Ovary (tissue), 10 donors: ENCODE measurements at regions of chr9 and their contacts with region 1.

Region 1: GRCh38 chr9:95004411-95005277 is 278.1 kb downstream of the AOPEP start:
- DNase-seq: peak; percentile 62 to 78 (median 74)
- H3K4me3 ChIP-seq: peak overlapping the region; percentile 72
- H3K27ac ChIP-seq: peak overlapping the region; percentile 100
- H3K4me1 ChIP-seq: peaks cover 10% of the 10 kb centered on the region
- H3K27me3 ChIP-seq: no peaks in the 10 kb centered on the region
- CTCF ChIP-seq: no peak
- EP300 ChIP-seq: no peak
- POLR2A ChIP-seq: peak; percentile 23

Region 2: DNA sequence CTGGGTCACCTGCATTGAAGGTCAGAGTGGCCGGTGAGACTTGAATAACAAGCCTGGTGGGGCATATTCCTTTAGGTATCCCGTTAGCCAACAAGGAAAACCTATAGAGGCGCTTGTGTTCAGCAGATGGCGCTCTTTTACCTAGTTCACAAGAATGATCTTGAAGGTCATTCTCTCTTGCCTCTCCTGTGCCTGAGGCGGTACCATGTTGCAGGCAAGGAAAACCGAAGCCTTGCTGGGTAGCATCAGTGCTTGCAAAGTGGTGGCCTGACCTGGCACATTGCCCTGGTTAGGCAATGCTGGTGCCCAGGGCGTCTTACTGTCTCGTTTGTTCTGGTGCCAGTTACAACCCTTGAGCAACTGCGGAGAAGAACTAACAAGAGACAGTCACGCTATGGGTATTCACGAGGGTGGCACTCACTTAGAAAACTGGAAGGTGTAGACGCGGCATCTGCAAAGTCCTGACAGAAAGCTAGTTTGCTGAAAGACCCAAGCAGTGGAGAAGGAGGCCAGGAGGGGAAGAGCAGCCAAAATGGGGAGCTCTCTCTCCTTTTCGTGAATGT is 221.5 kb before region 1 on chr9:
- intact Hi-C with region 1: loop called in 1 of 4 experiments (anchors 10 kb)
- DNase-seq: peak; percentile 62 to 83 (median 69)
- H3K4me3 ChIP-seq: no peak overlapping the region
- H3K27ac ChIP-seq: no peak overlapping the region
- H3K4me1 ChIP-seq: peaks cover 3% of the 10 kb centered on the region
- H3K27me3 ChIP-seq: no peaks in the 10 kb centered on the region
- CTCF ChIP-seq: peak in 2 of 3 donors; percentile 71 to 79
- EP300 ChIP-seq: no peak
- POLR2A ChIP-seq: no peak

Region 3: GRCh38 chr9:94860968-94861871 is 143.4 kb before region 1 on chr9:
- intact Hi-C with region 1: loop called in 1 of 4 experiments (anchors 10 kb)
- DNase-seq: no peak
- H3K4me3 ChIP-seq: no peak overlapping the region
- H3K27ac ChIP-seq: no peak overlapping the region
- H3K4me1 ChIP-seq: peaks cover 4% of the 10 kb centered on the region
- H3K27me3 ChIP-seq: no peaks in the 10 kb centered on the region
- CTCF ChIP-seq: no peak
- EP300 ChIP-seq: no peak
- POLR2A ChIP-seq: no peak

Region 4: DNA sequence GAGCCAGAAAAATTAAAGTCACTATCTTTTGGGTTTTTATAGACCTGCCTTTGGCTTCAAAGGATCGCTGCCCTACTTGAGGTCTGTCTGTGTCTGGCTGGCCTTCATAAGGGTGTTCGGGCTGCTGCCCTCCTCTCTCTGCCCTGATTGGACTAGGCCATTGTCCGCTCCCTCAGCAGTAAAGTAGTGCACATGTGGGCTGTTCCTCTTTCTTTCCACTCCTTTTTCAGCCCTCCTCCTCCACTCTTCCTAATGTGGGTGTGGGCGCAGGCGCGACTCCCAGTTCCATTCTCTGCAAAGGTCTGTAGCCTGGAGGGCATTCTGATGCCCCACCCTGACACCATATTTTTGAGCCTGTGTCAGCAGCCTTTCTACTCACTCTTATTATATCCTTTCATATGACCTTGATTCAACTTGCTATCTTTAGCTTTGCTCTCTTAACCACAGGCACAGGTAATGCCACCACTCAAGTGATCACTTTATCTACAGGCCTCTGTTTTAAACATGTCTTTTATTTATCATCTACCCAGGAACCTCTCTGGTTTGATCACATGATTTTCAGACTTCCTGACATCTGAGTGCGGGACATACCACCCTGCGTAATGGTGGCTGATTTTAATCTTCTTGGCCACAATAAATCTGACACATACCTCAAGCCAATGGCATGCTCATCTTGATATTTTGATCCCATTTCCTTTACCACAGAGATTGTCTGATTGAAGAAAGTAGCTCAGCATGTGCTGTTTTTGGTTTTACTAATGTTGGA is 133.7 kb before region 1 on chr9:
- intact Hi-C with region 1: loop called in 2 of 4 experiments (anchors 5 to 10 kb)
- DNase-seq: no peak
- H3K4me3 ChIP-seq: no peak overlapping the region
- H3K27ac ChIP-seq: no peak overlapping the region
- H3K4me1 ChIP-seq: peaks cover 18% of the 10 kb centered on the region
- H3K27me3 ChIP-seq: no peaks in the 10 kb centered on the region
- CTCF ChIP-seq: no peak
- EP300 ChIP-seq: no peak
- POLR2A ChIP-seq: no peak

Region 5: DNA sequence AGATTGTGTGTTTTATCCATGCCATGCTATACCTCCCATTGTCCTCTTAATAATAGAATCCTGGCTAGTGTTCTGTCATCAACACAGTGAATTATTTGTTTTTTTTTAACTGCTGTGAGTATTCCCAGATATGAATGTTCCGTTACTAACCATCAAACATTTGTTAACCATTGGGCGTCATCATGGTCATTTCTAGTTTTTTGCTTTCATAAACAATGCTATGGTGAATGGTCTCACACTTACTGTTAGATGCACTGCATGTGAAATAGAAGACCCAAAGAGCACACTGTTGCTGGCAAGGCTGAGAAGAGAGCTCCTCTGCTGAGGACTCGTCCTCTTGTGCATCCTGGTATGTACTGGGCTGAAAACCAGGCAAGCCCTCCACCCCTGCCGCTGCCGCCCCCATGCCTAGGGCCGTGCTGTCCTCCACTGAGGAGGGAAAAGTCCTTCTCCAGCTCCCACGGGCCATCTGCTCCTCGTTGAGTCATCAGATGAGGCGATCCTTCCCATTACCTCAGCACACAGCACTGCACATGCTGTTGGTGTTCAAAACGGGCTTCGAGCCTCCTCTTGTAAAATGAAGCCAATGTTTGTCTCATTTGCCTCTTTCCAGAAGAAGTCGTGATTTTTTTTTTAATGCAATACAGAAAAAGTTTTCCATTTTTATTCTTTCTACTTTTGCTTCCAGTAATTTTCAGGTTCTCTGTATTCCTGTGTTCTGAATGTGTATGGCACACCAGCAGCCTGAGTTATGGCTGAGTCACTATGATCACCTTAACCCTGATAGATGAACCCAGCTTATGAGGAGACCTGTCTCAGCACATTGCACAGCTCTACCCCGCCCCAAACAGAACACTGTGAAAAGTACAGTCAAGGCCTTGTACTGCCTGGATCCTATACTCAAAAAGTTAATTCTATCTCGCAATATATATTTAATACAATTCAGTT is 59.2 kb before region 1 on chr9:
- intact Hi-C with region 1: loop called in 1 of 4 experiments (anchors 10 kb)
- DNase-seq: peak; percentile 62 to 73 (median 67)
- H3K4me3 ChIP-seq: no peak overlapping the region
- H3K27ac ChIP-seq: peak overlapping the region; percentile 28 to 39
- H3K4me1 ChIP-seq: peaks cover 16% of the 10 kb centered on the region
- H3K27me3 ChIP-seq: no peaks in the 10 kb centered on the region
- CTCF ChIP-seq: no peak
- EP300 ChIP-seq: no peak
- POLR2A ChIP-seq: no peak

Region 6: DNA sequence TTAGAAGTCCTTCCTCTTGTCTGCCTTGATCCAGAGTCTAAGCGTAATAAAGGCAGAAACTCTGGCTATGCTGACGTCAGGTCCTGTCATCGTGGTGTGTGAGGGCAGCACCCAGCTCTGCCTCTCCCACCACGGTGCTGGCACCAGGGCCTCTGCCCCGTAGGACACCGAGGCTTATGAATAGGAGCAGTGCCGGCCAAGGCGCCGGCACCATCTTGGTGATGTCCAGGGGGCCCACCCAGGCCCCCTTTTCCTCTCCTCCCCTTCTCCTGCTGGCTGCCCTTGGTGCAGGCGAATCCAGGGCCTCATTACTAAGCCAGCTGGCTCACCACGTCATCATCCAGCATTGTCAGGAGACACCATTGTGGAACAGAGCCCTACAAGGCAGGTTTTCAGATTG is 60.6 kb after region 1 on chr9:
- intact Hi-C with region 1: loop called in 1 of 4 experiments (anchors 10 kb)
- DNase-seq: no peak
- H3K4me3 ChIP-seq: no peak overlapping the region
- H3K27ac ChIP-seq: peak overlapping the region in 1 of 2 donors; percentile 10
- H3K4me1 ChIP-seq: peaks cover 16% of the 10 kb centered on the region
- H3K27me3 ChIP-seq: no peaks in the 10 kb centered on the region
- CTCF ChIP-seq: no peak
- EP300 ChIP-seq: no peak
- POLR2A ChIP-seq: no peak